ENCODE measurements at regions of chr9 and their contacts with region 1.

Region 1: GRCh38 chr9:86326536-86326935 is 27.7 kb downstream of the TUT7 start:
- DNase-seq: no peak
- H3K4me3 ChIP-seq: no peak overlapping the region
- H3K27ac ChIP-seq: no peak overlapping the region
- H3K4me1 ChIP-seq: no peaks in the 10 kb centered on the region
- H3K27me3 ChIP-seq: no peaks in the 10 kb centered on the region
- CTCF ChIP-seq: no peak

Region 2: DNA sequence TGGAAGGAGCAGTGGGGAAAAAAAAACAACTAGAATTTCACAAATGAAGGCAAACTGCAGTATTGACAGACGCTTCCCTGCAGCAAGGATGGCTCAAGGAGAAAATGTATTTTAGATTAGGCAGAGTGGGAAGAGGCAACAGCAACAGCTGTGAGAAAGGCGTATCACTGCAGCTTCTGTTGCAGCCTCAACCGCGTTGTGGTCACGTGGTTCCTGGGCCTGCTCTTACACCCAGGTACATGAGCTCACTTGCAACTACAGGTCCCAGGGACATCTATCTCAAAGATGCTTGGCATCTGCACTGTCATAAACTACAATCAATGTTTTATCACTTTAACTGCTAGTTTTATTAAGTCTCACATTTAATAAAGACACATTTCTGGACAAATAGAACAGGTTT is 191.2 kb before region 1 on chr9:
- CTCF ChIA-PET with region 1: no interaction called
- POLR2A ChIA-PET with region 1: interaction called, 14 read pairs
- intact Hi-C with region 1: no loop called
- DNase-seq: no peak
- H3K4me3 ChIP-seq: no peak overlapping the region
- H3K27ac ChIP-seq: no peak overlapping the region
- H3K4me1 ChIP-seq: peaks cover 14% of the 10 kb centered on the region
- H3K27me3 ChIP-seq: no peaks in the 10 kb centered on the region
- CTCF ChIP-seq: no peak